ENCODE measurements at regions of chr3 and their contacts with region 1.

Region 1: DNA sequence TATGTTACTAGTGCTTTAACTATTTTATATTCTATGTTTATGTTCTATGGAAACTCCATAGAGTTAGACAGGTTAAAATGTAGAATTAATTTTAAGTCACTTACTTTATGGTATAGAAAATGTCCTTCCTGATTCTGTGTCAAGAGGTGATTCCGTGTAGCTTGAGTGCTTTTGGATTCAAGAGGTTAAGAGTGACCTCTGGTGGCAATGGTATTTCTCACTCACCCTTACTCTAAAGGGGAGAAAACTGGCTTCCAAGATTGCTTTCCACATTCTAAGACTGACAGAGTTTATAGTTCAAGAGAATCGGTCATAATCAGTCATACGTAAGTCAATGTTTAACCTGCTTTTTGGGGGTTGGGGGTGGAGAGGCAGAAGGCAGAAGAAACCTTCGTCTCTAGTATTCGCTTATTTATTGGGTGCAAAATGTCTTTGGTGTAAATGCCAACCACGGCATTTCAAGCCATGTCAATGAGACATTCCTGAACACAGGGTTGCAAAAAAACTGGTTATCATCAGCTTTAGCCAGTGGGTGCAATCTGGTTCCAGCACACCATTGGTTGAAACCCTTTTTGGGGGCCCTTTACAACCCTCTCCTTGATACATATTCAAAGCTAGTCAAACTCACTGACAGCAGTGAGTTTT is 92.0 kb upstream of the VGLL3 start:
- DNase-seq: peak; percentile 34
- H3K4me3 ChIP-seq: no peak overlapping the region
- H3K27ac ChIP-seq: no peak overlapping the region
- H3K4me1 ChIP-seq: no peaks in the 10 kb centered on the region
- H3K27me3 ChIP-seq: no peaks in the 10 kb centered on the region
- CTCF ChIP-seq: peak; percentile 20 to 27
- POLR2A ChIP-seq: no peak

Region 2: GRCh38 chr3:86702381-86702958 is 380.4 kb before region 1 on chr3:
- CTCF ChIA-PET with region 1: interaction called, 4 read pairs
- POLR2A ChIA-PET with region 1: no interaction called
- dilution Hi-C with region 1: no loop called
- intact Hi-C with region 1: loop called (anchors 10 kb)
- DNase-seq: peak; percentile 1
- H3K4me3 ChIP-seq: no peak overlapping the region
- H3K27ac ChIP-seq: no peak overlapping the region
- H3K4me1 ChIP-seq: no peaks in the 10 kb centered on the region
- H3K27me3 ChIP-seq: no peaks in the 10 kb centered on the region
- CTCF ChIP-seq: peak; percentile 13 to 21
- POLR2A ChIP-seq: no peak

Region 3: DNA sequence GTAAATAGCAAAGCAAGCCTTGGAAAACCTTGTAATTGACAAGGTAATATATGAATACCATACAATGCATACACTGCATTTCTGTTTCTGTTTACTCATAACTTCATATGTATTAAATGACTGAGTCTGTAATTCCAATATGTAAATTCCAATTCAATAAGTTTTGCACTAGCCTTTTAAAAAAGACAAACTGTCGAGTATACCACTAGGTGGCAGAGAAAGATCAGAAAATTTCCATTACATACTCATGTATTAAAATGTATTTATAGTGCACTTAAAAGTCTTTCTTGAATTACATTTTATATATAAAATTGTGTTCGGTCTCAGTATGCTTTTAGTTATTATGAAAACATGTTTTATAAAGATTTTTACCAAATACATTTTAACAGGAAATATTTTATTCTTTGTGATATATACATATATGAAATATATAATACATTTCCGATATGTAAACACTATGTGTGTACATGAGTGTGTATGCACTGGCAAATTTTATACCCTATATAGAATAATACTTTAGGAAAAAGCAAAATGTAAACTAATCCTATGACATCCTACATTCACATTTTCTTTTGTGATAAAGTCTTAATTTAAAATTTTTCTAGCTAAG is 308.7 kb before region 1 on chr3:
- CTCF ChIA-PET with region 1: interaction called, 90 read pairs
- POLR2A ChIA-PET with region 1: no interaction called
- dilution Hi-C with region 1: no loop called
- intact Hi-C with region 1: loop called (anchors 1 kb)
- DNase-seq: peak; percentile 12
- H3K4me3 ChIP-seq: no peak overlapping the region
- H3K27ac ChIP-seq: no peak overlapping the region
- H3K4me1 ChIP-seq: no peaks in the 10 kb centered on the region
- H3K27me3 ChIP-seq: no peaks in the 10 kb centered on the region
- CTCF ChIP-seq: peak; percentile 11
- POLR2A ChIP-seq: no peak

Region 4: DNA sequence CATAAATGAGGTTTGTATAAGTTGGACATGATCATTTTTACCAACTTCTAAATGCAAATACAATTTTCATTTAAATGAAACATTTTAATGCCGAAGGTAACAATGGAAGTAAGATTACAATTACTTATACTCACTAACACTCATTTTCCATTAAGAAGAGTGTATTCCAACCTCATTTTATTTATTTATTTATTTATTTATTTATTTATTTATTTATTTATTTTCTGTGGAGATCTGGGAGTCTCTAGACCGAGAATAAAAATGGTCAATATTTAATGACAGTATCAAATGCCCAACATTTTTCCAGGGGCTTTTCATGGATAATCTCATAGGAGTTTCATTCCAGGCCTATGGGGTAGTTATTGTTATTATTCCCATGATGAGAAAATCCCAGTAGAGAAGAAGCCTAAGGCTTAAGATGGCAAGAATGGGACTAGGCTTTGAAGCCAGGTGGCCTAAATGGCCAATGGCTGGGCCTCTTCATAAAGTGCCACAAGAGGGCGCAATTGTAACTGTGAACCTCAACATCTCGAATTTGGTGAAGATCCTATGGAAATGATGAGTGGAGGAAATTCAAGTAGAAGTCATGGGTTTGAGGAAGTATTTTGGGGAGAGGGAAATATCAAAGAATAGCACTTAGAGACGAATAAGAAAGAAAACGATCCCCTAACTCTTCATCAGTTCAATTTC is 113.3 kb before region 1 on chr3:
- CTCF ChIA-PET with region 1: interaction called, 17 read pairs
- POLR2A ChIA-PET with region 1: no interaction called
- dilution Hi-C with region 1: no loop called
- intact Hi-C with region 1: loop called (anchors 1 kb)
- DNase-seq: peak; percentile 38
- H3K4me3 ChIP-seq: no peak overlapping the region
- H3K27ac ChIP-seq: no peak overlapping the region
- H3K4me1 ChIP-seq: peaks cover 2% of the 10 kb centered on the region
- H3K27me3 ChIP-seq: no peaks in the 10 kb centered on the region
- CTCF ChIP-seq: peak; percentile 57 to 73
- POLR2A ChIP-seq: no peak

Region 5: GRCh38 chr3:87006844-87007439 is 76.0 kb before region 1 on chr3:
- CTCF ChIA-PET with region 1: interaction called, 26 read pairs
- POLR2A ChIA-PET with region 1: no interaction called
- dilution Hi-C with region 1: no loop called
- intact Hi-C with region 1: no loop called
- DNase-seq: no peak
- H3K4me3 ChIP-seq: no peak overlapping the region
- H3K27ac ChIP-seq: no peak overlapping the region
- H3K4me1 ChIP-seq: no peaks in the 10 kb centered on the region
- H3K27me3 ChIP-seq: peaks cover 0 to 5% of the 10 kb centered on the region in 2 experiments
- CTCF ChIP-seq: no peak
- POLR2A ChIP-seq: no peak

Measured in endothelial cell of umbilical vein (primary cell).